Activated T-helper 1 cell treated with anti-CD3 and anti-CD28 coated beads, Interleukin-12 subunit alpha, Interleukin-12 subunit beta, Interleukin-2, Interleukin-4 antibody, amounts not matched to agents 30 ng/mL and 10 ng/mL and 1 ng/mL, durations not matched to agents 14 hours and 24 hours and 36 hours (primary cell): ENCODE measurements at regions of chr5 and their contacts with region 1.

Region 1: GRCh38 chr5:76402886-76403765 is at the start of gene IQGAP2:
- DNase-seq: peak; percentile 79
- H3K4me3 Mint-ChIP-seq: peak within 1 kb of the TSS; percentile 98
- H3K27ac Mint-ChIP-seq: peak within 1 kb of the TSS; percentile 99
- H3K4me1 Mint-ChIP-seq: peaks cover 60% of the 10 kb centered on the region
- H3K27me3 Mint-ChIP-seq: peaks cover 4% of the 10 kb centered on the region
- total RNA-seq, gene IQGAP2: 43.5 and 45.4 TPM in 2 replicates

Region 2: GRCh38 chr5:75336625-75337339 is 1066.3 kb before region 1 on chr5 and contains the start of gene HMGCR:
- intact Hi-C with region 1: loop called (anchors 10 kb)
- DNase-seq: peak; percentile 96
- H3K4me3 Mint-ChIP-seq: no peak within 1 kb of the TSS
- H3K27ac Mint-ChIP-seq: no peak within 1 kb of the TSS
- H3K4me1 Mint-ChIP-seq: peaks cover 40% of the 10 kb centered on the region
- H3K27me3 Mint-ChIP-seq: no peaks in the 10 kb centered on the region
- total RNA-seq, gene HMGCR: 95.7 and 113 TPM in 2 replicates

Region 3: DNA sequence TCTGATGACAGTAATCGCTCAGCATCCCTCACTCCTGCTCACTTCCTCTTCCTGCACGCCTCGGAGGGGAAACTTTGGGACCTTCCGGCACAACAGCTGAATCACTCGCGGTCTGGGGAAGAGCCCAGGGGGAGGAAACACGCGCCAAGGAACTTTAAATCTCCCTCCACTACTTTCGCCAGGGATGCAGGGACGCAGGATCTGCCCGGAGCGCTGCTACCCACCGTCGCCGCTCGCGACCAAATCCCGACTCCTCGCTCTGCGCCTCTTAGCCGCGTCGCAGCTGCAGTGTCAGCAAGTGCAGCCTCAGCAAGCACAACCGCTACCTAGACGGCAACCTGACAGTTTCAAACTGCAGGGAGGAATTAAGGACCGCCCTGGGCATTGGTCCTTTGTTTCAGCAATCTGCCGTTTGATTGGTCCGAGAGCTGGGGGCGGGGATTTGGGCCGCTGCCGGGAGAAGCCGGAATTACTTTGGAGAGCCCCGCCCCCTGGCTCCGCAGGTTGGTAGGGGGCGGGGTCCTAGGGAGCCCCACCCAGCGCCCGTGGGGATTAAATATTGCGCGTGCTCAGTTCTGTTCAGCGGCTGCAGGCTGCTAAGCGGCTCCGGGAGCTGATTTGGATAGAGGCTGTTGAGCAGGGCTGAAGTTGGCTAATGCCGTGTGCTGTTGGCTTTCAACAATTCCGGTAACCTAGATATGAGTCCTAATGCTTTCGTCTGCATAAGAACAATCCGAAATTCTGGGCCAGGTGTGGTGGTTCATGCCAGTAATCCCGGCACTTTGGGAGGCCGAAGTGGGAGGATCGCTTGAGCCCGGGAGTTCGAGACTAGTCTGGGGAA is 685.8 kb before region 1 on chr5 and contains the start of gene POC5:
- intact Hi-C with region 1: loop called (anchors 5 kb)
- DNase-seq: peak; percentile 98
- H3K4me3 Mint-ChIP-seq: peak within 1 kb of the TSS; percentile 98
- H3K27ac Mint-ChIP-seq: peak within 1 kb of the TSS; percentile 100
- H3K4me1 Mint-ChIP-seq: peaks cover 34% of the 10 kb centered on the region
- H3K27me3 Mint-ChIP-seq: peaks cover 3% of the 10 kb centered on the region
- total RNA-seq, gene POC5: 20.7 and 24.2 TPM in 2 replicates

Region 4: DNA sequence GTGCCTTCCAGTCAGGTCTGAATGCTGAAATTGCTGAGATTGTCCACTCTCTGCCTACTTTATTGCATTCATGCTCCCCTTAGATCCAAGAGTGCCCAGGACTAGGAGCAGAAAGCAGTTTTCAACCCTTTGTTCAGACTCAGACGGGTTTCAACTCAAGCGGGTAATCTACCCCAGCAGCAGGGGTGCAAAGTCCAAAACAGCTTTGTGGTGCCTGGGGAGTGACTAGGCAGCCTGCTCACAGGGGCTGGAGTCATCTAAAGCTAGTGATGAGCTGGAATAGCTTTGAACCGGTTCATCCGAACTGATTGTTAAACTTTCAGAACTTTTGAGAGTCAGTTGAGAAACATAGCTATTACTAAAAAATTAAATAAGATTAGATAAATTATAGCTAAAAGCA is 71.0 kb before region 1 on chr5:
- intact Hi-C with region 1: loop called (anchors 2 kb)
- DNase-seq: no peak
- H3K4me3 Mint-ChIP-seq: no peak overlapping the region
- H3K27ac Mint-ChIP-seq: no peak overlapping the region
- H3K4me1 Mint-ChIP-seq: peaks cover 66% of the 10 kb centered on the region
- H3K27me3 Mint-ChIP-seq: no peaks in the 10 kb centered on the region

Region 5: GRCh38 chr5:76386360-76386759 is 16.8 kb before region 1 on chr5:
- intact Hi-C with region 1: no loop called
- DNase-seq: no peak
- H3K4me3 Mint-ChIP-seq: no peak overlapping the region
- H3K27ac Mint-ChIP-seq: no peak overlapping the region
- H3K4me1 Mint-ChIP-seq: peaks cover 37% of the 10 kb centered on the region
- H3K27me3 Mint-ChIP-seq: peaks cover 3% of the 10 kb centered on the region

Region 6: DNA sequence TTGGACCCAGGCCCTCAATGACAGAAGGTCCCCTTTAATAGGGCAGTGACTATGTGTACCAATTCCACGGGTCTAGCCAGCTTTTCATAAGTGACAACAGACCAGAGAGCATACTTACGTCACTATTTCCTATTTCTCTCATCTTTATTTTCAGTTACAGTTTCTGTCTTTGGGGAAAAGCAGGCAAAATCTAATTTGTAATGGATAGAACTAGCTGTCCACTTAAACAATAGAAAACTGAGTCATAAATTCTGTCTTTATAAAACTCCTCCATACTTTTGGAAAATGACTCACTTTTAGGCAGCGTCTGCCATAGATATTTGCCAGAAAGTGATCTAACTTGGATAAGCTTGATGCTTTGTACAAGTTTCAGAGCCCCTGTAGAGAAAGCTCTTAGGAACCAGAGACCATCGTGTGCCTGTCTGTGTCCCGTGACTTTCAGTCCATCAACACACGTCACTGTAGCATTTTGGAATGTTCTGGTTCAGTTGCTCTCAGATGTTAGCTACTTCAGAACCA is 118.2 kb after region 1 on chr5:
- intact Hi-C with region 1: loop called (anchors 1 kb)
- DNase-seq: no peak
- H3K4me3 Mint-ChIP-seq: peak overlapping the region; percentile 63
- H3K27ac Mint-ChIP-seq: peak overlapping the region; percentile 91
- H3K4me1 Mint-ChIP-seq: peaks cover 58% of the 10 kb centered on the region
- H3K27me3 Mint-ChIP-seq: no peaks in the 10 kb centered on the region

Region 7: GRCh38 chr5:76641514-76642120 is 238.5 kb after region 1 on chr5:
- intact Hi-C with region 1: loop called (anchors 1 kb)
- DNase-seq: peak; percentile 41
- H3K4me3 Mint-ChIP-seq: no peak overlapping the region
- H3K27ac Mint-ChIP-seq: no peak overlapping the region
- H3K4me1 Mint-ChIP-seq: peaks cover 22% of the 10 kb centered on the region
- H3K27me3 Mint-ChIP-seq: no peaks in the 10 kb centered on the region

Region 8: GRCh38 chr5:76771705-76772405 is 368.7 kb after region 1 on chr5:
- intact Hi-C with region 1: loop called (anchors 2 kb)
- DNase-seq: no peak
- H3K4me3 Mint-ChIP-seq: no peak overlapping the region
- H3K27ac Mint-ChIP-seq: no peak overlapping the region
- H3K4me1 Mint-ChIP-seq: no peaks in the 10 kb centered on the region
- H3K27me3 Mint-ChIP-seq: no peaks in the 10 kb centered on the region